H1 (cell line): ENCODE measurements at regions of chr4 and their contacts with region 1.

Region 1: GRCh38 chr4:24352112-24352511 is 232.2 kb downstream of the DHX15 start:
- DNase-seq: no peak
- H3K4me3 ChIP-seq: no peak overlapping the region
- H3K27ac ChIP-seq: no peak overlapping the region
- H3K4me1 ChIP-seq: peaks cover 0 to 4% (median 2%) of the 10 kb centered on the region in 4 experiments; a peak in 1 of 7 replicates
- H3K27me3 ChIP-seq: peaks cover 0 to 5% (median 1%) of the 10 kb centered on the region in 4 experiments; a peak in 2 of 7 replicates
- CTCF ChIP-seq: no peak
- EP300 ChIP-seq: no peak
- POLR2A ChIP-seq: no peak
- RAD21 ChIP-seq: peak in 1 of 2 experiments; percentile 24; a peak in 1 of 4 replicates

Region 2: DNA sequence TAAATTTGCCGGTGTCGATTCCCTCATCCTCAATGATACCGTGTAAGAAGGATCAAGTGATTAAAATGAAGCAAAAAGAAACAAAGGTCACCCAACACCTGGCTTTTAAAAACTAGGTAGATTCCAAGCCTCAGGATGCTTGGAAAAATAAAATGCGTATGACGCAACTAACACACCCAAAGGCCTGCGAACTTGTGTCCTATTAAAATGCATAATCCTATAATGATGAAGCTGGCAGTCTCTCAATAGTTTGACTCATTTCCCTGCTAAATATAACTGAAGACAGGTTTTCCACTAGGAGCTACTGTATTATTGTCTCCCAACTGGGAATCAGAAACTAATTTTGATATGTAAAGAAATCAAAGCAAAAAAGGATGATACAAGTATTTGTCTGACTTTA is 31.0 kb before region 1 on chr4:
- CTCF ChIA-PET with region 1: interaction called, 21 read pairs
- POLR2A ChIA-PET with region 1: interaction called, 3 read pairs
- DNase-seq: no peak
- H3K4me3 ChIP-seq: peak overlapping the region in 3 of 4 experiments; percentile 3 to 49 (median 26); a peak in 4 of 8 replicates
- H3K27ac ChIP-seq: peak overlapping the region; percentile 4; the same call in 1 of the 2 replicates
- H3K4me1 ChIP-seq: peaks cover 4 to 24% (median 13%) of the 10 kb centered on the region in 4 experiments; a peak in 6 of 7 replicates
- H3K27me3 ChIP-seq: no peaks in the 10 kb centered on the region
- CTCF ChIP-seq: no peak
- EP300 ChIP-seq: no peak
- POLR2A ChIP-seq: no peak
- RAD21 ChIP-seq: no peak

Region 3: DNA sequence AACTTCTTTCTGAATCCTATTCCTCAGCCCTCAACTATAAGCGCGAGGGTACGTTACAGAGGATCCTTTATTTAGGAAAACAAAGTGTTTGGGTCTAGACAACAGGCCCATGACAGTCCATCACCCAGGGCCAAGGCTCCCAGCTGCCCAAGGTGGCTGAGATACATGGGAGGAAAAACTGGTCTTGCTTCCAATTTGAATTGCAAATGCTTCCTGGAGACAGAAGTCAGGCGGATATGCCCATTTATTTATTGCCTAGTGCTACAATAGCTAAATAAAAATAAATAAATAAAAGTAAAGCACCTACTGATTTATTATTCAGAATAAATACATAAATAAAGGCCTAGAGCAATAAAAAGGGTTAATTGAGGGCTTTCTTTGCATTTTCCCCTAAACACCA is 16.5 kb before region 1 on chr4:
- CTCF ChIA-PET with region 1: interaction called, 18 read pairs
- POLR2A ChIA-PET with region 1: no interaction called
- DNase-seq: no peak
- H3K4me3 ChIP-seq: no peak overlapping the region
- H3K27ac ChIP-seq: no peak overlapping the region
- H3K4me1 ChIP-seq: peaks cover 0 to 2% (median 0%) of the 10 kb centered on the region in 4 experiments; a peak in 2 of 7 replicates
- H3K27me3 ChIP-seq: no peaks in the 10 kb centered on the region
- CTCF ChIP-seq: no peak
- EP300 ChIP-seq: no peak
- POLR2A ChIP-seq: no peak
- RAD21 ChIP-seq: no peak

Region 4: GRCh38 chr4:24380953-24381506 is 28.9 kb after region 1 on chr4:
- CTCF ChIA-PET with region 1: interaction called, 10 read pairs
- POLR2A ChIA-PET with region 1: interaction called, 3 read pairs
- DNase-seq: no peak
- H3K4me3 ChIP-seq: no peak overlapping the region
- H3K27ac ChIP-seq: no peak overlapping the region
- H3K4me1 ChIP-seq: no peaks in the 10 kb centered on the region
- H3K27me3 ChIP-seq: no peaks in the 10 kb centered on the region; a peak in 1 of 7 replicates
- CTCF ChIP-seq: no peak
- EP300 ChIP-seq: no peak
- POLR2A ChIP-seq: no peak
- RAD21 ChIP-seq: no peak

Region 5: GRCh38 chr4:24419181-24420034 is 67.3 kb after region 1 on chr4:
- CTCF ChIA-PET with region 1: interaction called, 15 read pairs
- POLR2A ChIA-PET with region 1: no interaction called
- DNase-seq: peak; percentile 41 to 94
- H3K4me3 ChIP-seq: no peak overlapping the region
- H3K27ac ChIP-seq: no peak overlapping the region
- H3K4me1 ChIP-seq: peaks cover 0 to 2% (median 0%) of the 10 kb centered on the region in 4 experiments; a peak in 2 of 7 replicates
- H3K27me3 ChIP-seq: 0 out of 7 replicates have a peak, but pooled peaks cover 0 to 4% (median 0%) of the 10 kb centered on the region in 4 experiments
- CTCF ChIP-seq: peak; percentile 89 to 96 (median 90)
- EP300 ChIP-seq: no peak
- POLR2A ChIP-seq: no peak
- RAD21 ChIP-seq: peak; percentile 98 to 99